ENCODE measurements at regions of chr10 and their contacts with region 1.

Region 1: DNA sequence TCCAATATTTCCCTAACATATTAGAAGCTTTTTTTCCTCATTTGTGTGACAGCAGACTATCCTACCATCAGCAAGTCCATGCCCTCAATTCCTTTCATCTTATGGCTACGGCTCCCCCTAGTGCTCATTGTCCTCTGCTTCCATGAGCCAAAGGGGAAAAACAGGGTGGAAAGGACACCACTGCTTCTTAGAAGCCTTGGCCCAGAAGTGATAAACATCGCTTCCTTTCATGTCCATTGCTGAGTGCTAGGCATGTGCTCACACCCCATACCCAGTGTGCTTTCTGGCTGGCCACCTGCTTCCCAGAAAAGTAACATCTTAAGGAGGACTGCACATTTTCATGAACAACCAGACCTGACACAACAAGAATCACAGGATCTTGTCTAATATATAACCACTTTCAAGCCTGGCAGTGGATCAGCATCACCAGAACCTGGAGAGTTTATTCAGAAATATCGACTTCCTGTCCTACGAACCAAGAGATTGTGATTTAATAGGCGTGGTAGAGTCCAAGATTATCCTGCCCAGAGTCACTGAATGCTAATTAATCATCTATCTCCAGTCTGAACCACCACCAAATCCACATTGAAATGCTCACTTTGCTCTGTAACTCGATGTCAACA is 650.5 kb upstream of the SORCS1 start:
- DNase-seq: peak; percentile 5
- ATAC-seq: peak; percentile 57
- H3K4me3 ChIP-seq: no peak overlapping the region
- H3K27ac ChIP-seq: no peak overlapping the region
- H3K4me1 ChIP-seq: no peaks in the 10 kb centered on the region
- H3K27me3 ChIP-seq: no peaks in the 10 kb centered on the region
- CTCF ChIP-seq: peak; percentile 37; the same call in 1 of the 2 replicates
- POLR2A ChIP-seq: no peak
- RAD21 ChIP-seq: peak; percentile 40

Region 2: DNA sequence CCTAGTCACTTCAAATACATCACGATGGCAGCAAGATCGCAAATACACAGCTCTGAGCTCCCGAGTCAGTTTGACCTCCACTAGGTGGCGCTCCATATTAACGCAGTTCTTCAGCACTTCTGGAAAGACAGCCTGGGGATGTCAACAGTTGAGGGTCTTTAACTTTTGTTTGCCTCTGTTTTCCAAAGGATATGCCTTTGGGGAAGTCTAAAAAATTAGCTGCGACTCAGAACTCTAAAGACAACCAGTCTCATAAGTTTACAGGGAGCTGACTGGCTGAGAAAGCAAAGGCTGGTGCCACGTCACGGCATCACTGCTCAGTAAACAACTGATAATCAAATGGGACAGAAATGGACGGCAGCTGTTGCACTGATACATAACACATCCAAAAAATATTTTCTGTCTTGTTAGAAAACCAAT is 1109.3 kb before region 1 on chr10:
- CTCF ChIA-PET with region 1: no interaction called
- POLR2A ChIA-PET with region 1: no interaction called
- dilution Hi-C with region 1: no loop called
- in situ Hi-C with region 1: no loop called
- intact Hi-C with region 1: loop called (anchors 10 kb)
- DNase-seq: peak; percentile 37
- ATAC-seq: peak; percentile 44; the same call in 1 of the 2 replicates
- H3K4me3 ChIP-seq: no peak overlapping the region
- H3K27ac ChIP-seq: no peak overlapping the region
- H3K4me1 ChIP-seq: no peaks in the 10 kb centered on the region
- H3K27me3 ChIP-seq: no peaks in the 10 kb centered on the region
- CTCF ChIP-seq: peak; percentile 46
- POLR2A ChIP-seq: no peak
- RAD21 ChIP-seq: peak; percentile 45

Region 3: DNA sequence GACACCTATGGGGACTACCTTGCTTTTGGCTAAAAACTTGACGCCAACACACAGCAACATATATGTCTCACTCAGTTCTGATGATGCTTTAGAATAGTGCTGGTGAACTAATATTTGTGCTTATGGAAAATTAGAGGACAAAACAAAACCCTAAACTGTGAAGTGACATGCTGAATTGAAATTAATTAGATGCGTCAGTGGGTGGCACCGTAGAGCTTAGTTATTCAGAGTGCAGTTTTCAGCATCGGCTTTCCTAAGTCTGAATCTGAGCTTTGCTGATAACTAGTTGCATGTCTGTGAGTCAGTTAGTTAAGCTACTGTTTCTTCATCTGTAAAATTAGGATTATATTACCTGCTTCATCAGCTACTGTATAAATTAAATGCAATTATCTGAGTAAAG is 405.5 kb before region 1 on chr10:
- CTCF ChIA-PET with region 1: no interaction called
- POLR2A ChIA-PET with region 1: no interaction called
- dilution Hi-C with region 1: no loop called
- in situ Hi-C with region 1: no loop called
- intact Hi-C with region 1: loop called (anchors 1 kb)
- DNase-seq: peak; percentile 0
- ATAC-seq: no peak
- H3K4me3 ChIP-seq: no peak overlapping the region
- H3K27ac ChIP-seq: no peak overlapping the region
- H3K4me1 ChIP-seq: no peaks in the 10 kb centered on the region
- H3K27me3 ChIP-seq: no peaks in the 10 kb centered on the region
- CTCF ChIP-seq: no peak; the same call in 1 of the 2 replicates
- POLR2A ChIP-seq: no peak
- RAD21 ChIP-seq: peak; percentile 17; the same call in 1 of the 2 replicates

Region 4: DNA sequence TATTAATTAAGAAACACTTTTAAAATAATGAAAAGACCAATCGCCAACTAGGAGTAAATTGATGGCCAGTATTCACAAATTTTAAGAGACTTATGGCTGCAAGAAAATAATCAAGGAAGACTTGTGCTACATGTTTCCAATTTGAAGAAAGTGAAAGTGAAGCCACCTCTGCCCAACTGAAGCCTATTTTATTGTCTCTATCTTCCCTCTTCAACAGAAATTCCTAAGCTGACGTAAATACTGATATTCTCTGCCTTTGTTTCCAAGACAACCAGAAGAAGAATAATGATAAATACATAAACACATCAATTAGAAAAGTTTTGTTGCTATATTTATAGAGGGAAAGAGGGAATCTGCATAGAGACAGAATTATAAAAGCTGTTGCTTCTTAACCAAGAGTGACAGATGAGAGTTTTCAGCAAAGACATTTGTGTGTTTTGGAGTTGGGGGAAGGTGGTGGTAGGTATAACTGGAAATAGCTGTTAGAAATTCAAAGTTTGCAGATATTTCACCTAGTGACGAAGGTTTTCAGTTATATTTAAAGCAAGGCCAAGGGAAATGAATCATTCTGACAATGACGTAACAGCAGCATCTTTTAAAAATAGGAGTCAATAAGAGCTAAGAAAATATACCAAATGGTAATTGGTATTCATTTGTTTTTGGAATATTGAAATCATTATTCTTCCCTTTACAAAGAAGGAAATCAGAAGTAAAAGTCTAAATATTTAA is 73.8 kb before region 1 on chr10:
- CTCF ChIA-PET with region 1: no interaction called
- POLR2A ChIA-PET with region 1: no interaction called
- dilution Hi-C with region 1: no loop called
- in situ Hi-C with region 1: no loop called
- intact Hi-C with region 1: no loop called
- DNase-seq: peak; percentile 13
- ATAC-seq: no peak
- H3K4me3 ChIP-seq: no peak overlapping the region
- H3K27ac ChIP-seq: no peak overlapping the region
- H3K4me1 ChIP-seq: no peaks in the 10 kb centered on the region
- H3K27me3 ChIP-seq: no peaks in the 10 kb centered on the region
- CTCF ChIP-seq: no peak
- POLR2A ChIP-seq: no peak
- RAD21 ChIP-seq: no peak

Measured in IMR-90 (cell line).